ENCODE measurements at regions of chr16 and their contacts with region 1.

Region 1: GRCh38 chr16:30775392-30776188 is 11.4 kb downstream of the ZNF629 start:
- DNase-seq: peak; percentile 92
- H3K4me3 ChIP-seq: peak overlapping the region; percentile 48 to 84 (median 62)
- H3K27ac ChIP-seq: peak overlapping the region; percentile 39 to 86 (median 75)
- H3K4me1 ChIP-seq: peaks cover 12 to 58% (median 32%) of the 10 kb centered on the region in 6 donors
- H3K27me3 ChIP-seq: peaks cover 0 to 16% (median 0%) of the 10 kb centered on the region in 7 donors
- CTCF ChIP-seq: no peak
- POLR2A ChIP-seq: no peak

Region 2: GRCh38 chr16:30534368-30535105 is 241.1 kb before region 1 on chr16 and contains the start of gene ZNF747:
- intact Hi-C with region 1: no loop called
- DNase-seq: peak; percentile 97
- H3K4me3 ChIP-seq: peak within 1 kb of the TSS; percentile 62 to 85 (median 74)
- H3K27ac ChIP-seq: peak within 1 kb of the TSS; percentile 86 to 96 (median 96)
- H3K4me1 ChIP-seq: peaks cover 7 to 65% (median 32%) of the 10 kb centered on the region in 6 donors
- H3K27me3 ChIP-seq: no peaks in the 10 kb centered on the region
- CTCF ChIP-seq: peak in 3 of 11 experiments; percentile 5 to 21 (median 15)
- POLR2A ChIP-seq: peak; percentile 20 to 72 (median 45)
- total RNA-seq, gene ZNF747: 7.7 to 16.1 (median 14.0) TPM

Region 3: GRCh38 chr16:30551781-30552180 is 223.8 kb before region 1 on chr16:
- intact Hi-C with region 1: no loop called
- DNase-seq: no peak
- H3K4me3 ChIP-seq: no peak overlapping the region
- H3K27ac ChIP-seq: peak overlapping the region in 7 of 8 donors; percentile 1 to 65 (median 43)
- H3K4me1 ChIP-seq: peaks cover 11 to 61% (median 40%) of the 10 kb centered on the region in 6 donors
- H3K27me3 ChIP-seq: no peaks in the 10 kb centered on the region
- CTCF ChIP-seq: no peak
- POLR2A ChIP-seq: no peak

Region 4: DNA sequence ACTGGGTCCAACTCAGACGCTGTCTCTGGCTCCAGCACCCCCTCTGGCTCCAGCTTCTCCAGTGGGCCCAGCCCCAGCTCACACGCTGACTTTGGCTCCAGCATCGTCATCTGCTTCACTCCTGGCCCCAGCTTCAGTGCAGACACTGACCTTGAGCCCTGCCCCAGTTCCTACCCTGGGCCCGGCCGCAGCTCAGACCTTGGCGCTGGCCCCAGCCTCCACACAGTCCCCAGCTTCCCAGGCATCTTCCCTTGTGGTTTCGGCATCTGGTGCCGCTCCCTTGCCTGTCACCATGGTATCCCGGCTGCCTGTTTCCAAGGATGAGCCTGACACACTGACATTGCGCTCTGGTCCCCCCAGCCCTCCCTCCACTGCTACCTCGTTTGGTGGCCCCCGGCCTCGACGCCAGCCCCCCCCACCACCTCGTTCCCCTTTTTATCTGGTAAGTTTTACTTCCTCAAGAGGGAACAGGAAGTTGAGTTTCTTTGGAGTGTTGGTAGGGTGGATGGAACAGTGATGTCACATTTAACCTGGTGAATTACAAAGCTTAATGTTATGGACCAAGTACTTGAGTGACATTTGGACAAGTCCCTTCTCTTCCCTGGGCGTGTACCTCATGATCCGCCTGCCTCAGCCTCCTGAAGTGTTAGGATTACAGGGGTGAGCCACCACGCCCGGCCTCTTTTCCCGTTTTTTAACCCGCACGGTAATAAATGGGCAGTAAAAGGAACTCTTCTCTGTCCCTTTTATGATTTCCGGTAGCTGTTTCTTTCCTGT is 50.8 kb before region 1 on chr16:
- intact Hi-C with region 1: loop called (anchors 10 kb)
- DNase-seq: peak; percentile 76
- H3K4me3 ChIP-seq: peak overlapping the region in 1 of 8 donors; percentile 17
- H3K27ac ChIP-seq: peak overlapping the region in 7 of 8 donors; percentile 35 to 75 (median 48)
- H3K4me1 ChIP-seq: peaks cover 3 to 51% (median 25%) of the 10 kb centered on the region in 6 donors
- H3K27me3 ChIP-seq: no peaks in the 10 kb centered on the region
- CTCF ChIP-seq: no peak
- POLR2A ChIP-seq: no peak